Right ventricle myocardium inferior (tissue), 1 donor: ENCODE measurements at regions of chr9 and their contacts with region 1.

Region 1: DNA sequence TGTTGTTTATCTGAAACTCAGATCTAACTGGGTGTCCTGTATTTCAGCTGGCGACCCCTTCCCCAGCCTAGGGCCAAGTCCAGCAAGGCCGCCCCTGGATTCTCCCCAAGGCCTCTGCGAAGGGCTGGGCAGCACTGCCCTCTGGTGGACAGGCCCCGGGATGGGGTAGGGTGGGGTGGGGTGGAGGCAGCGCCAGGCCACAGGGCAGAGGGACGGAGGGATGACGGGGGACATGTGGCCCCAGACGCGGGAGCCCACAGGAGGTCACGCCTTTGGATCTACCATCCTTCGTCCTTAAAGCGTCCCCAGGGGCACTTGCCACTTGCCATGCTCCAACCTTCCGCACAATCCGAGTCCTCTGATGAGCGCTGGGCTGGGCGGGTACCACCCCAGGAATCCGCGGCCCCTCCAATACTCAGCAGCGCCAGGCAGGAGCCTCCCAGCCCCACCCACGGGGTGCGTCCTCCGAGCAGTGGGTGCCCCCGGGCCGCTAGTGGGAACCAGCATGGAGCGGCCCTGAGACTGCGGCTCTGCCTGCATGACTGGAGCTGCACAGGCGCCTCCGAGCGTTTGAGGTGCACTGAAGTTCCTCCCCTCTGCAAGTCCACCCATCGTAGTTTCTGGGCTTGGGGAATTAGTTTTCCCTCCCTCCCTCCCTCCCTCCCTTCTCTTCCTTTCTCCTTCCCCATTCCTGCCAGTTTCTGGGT is 7.1 kb upstream of the AGPAT2 start:
- DNase-seq: no peak
- ATAC-seq: peak; percentile 30

Region 2: GRCh38 chr9:136482793-136483588 is 211.4 kb before region 1 on chr9 and contains the start of gene SEC16A:
- intact Hi-C with region 1: loop called (anchors 5 kb)
- DNase-seq: peak; percentile 100
- ATAC-seq: peak; percentile 89
- total RNA-seq, gene SEC16A: 22.3 TPM

Region 3: GRCh38 chr9:136619742-136620440 is 74.5 kb before region 1 on chr9:
- intact Hi-C with region 1: no loop called
- DNase-seq: peak; percentile 95
- ATAC-seq: peak; percentile 12

Region 4: DNA sequence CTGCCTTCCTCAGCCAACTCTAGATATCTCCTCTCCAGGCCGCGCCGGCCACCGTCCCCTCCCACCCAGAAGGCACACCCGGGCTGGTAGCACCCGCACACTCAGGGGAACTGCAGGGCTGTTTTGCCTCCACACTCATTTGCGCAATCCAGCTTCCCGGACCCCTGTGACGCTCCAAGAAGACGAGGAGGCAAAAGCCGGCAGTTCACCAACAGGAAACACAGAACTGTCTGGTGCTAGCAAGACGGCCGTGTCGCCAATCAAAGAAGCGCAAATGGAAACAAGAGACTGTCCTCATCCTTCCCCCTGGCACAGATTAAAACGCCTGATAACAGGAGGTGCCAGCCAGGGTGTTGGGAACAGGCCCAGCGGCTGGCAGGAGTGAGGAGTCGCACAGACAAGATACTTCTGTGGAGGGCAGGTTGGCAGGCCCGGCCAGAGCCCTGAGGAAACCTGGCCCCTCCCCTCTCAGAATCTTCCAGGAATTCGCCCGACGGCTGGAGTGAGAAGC is 14.9 kb before region 1 on chr9:
- intact Hi-C with region 1: loop called (anchors 1 kb)
- DNase-seq: no peak
- ATAC-seq: no peak